Activated CD4-positive, alpha-beta T cell treated with anti-CD3 and anti-CD28 coated beads, Interleukin-2, amount 10 ng/mL, durations not matched to agents 24 days and 14 days (primary cell): ENCODE measurements at regions of chr2 and their contacts with region 1.

Region 1: DNA sequence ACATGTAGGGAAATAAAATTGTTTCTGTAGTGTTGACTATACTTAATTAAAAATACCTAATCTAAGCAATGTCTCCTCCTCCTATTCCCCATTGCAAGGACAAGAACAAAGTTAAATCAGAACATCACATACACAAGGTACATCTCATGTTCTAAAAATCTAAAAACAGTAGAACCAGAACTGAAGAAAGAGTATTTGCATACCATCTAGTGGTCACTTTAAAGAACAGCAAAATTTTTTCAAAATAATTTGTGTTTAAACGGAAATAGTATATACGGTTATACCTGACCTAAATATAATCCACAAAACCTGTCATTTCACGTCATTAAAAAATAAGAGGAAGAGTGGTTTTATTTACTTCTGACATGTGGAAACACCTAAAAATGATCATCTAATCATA is 294.3 kb upstream of the KCNH7 start:
- DNase-seq: no peak
- H3K4me3 Mint-ChIP-seq: no peak overlapping the region
- H3K27ac Mint-ChIP-seq: no peak overlapping the region
- H3K4me1 Mint-ChIP-seq: no peaks in the 10 kb centered on the region
- H3K27me3 Mint-ChIP-seq: no peaks in the 10 kb centered on the region

Region 2: GRCh38 chr2:162890690-162891311 is 242.0 kb before region 1 on chr2:
- intact Hi-C with region 1: loop called (anchors 10 kb)
- DNase-seq: peak; percentile 66
- H3K4me3 Mint-ChIP-seq: no peak overlapping the region
- H3K27ac Mint-ChIP-seq: no peak overlapping the region
- H3K4me1 Mint-ChIP-seq: no peaks in the 10 kb centered on the region
- H3K27me3 Mint-ChIP-seq: no peaks in the 10 kb centered on the region

Region 3: GRCh38 chr2:163171786-163172531 is 39.1 kb after region 1 on chr2:
- intact Hi-C with region 1: no loop called
- DNase-seq: no peak
- H3K4me3 Mint-ChIP-seq: no peak overlapping the region
- H3K27ac Mint-ChIP-seq: no peak overlapping the region
- H3K4me1 Mint-ChIP-seq: no peaks in the 10 kb centered on the region
- H3K27me3 Mint-ChIP-seq: no peaks in the 10 kb centered on the region

Region 4: GRCh38 chr2:163191372-163191771 is 58.5 kb after region 1 on chr2:
- intact Hi-C with region 1: no loop called
- DNase-seq: no peak
- H3K4me3 Mint-ChIP-seq: no peak overlapping the region
- H3K27ac Mint-ChIP-seq: no peak overlapping the region
- H3K4me1 Mint-ChIP-seq: no peaks in the 10 kb centered on the region
- H3K27me3 Mint-ChIP-seq: no peaks in the 10 kb centered on the region